Activated CD4-positive, alpha-beta memory T cell treated with anti-CD3 and anti-CD28 coated beads for 36 hours (primary cell): ENCODE measurements at regions of chr1 and their contacts with region 1.

Region 1: GRCh38 chr1:96966536-96967138 is 245.1 kb downstream of the PTBP2 start:
- DNase-seq: peak; percentile 79
- H3K4me3 Mint-ChIP-seq: no peak overlapping the region
- H3K27ac Mint-ChIP-seq: no peak overlapping the region
- H3K4me1 Mint-ChIP-seq: no peaks in the 10 kb centered on the region
- H3K27me3 Mint-ChIP-seq: peaks cover 19% of the 10 kb centered on the region

Region 2: GRCh38 chr1:97524211-97524610 is 557.6 kb after region 1 on chr1:
- CTCF ChIA-PET with region 1: no interaction called
- POLR2A ChIA-PET with region 1: no interaction called
- intact Hi-C with region 1: loop called (anchors 10 kb)
- DNase-seq: no peak
- H3K4me3 Mint-ChIP-seq: no peak overlapping the region
- H3K27ac Mint-ChIP-seq: no peak overlapping the region
- H3K4me1 Mint-ChIP-seq: no peaks in the 10 kb centered on the region
- H3K27me3 Mint-ChIP-seq: no peaks in the 10 kb centered on the region

Region 3: DNA sequence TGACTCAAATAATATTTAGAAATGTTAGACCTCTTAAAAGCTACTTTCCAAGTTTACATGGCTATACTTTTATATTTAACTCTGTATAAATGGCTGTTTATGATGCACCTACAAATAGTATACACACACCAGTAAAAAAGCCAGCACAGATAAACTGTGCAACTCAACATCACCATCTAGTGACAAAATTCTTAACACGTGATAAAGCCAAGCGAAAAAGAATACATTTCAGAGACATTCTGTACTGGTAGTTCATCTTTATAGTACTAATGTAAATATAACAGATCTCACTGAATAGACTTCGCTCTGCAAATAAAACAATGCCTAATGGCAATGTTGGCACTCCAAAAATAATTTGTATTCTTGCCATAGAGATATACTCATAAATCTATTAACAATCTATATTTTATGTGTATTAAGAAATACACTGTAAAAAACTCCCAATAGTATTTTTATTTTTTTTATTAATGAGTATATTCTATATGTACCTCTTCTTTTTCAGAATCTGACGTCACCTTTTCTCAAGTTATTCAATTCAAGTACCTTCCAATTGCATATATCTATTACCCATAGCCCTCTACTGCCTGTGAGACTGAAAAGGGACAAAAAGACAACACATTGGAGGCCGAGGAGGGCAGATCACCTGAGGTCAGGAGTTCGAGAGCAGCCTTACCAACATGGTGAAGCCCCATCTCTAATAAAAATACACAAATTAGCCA is 854.0 kb after region 1 on chr1:
- CTCF ChIA-PET with region 1: interaction called, 4 read pairs
- POLR2A ChIA-PET with region 1: no interaction called
- intact Hi-C with region 1: loop called (anchors 2 kb)
- DNase-seq: no peak
- H3K4me3 Mint-ChIP-seq: no peak overlapping the region
- H3K27ac Mint-ChIP-seq: no peak overlapping the region
- H3K4me1 Mint-ChIP-seq: no peaks in the 10 kb centered on the region
- H3K27me3 Mint-ChIP-seq: no peaks in the 10 kb centered on the region

Region 4: DNA sequence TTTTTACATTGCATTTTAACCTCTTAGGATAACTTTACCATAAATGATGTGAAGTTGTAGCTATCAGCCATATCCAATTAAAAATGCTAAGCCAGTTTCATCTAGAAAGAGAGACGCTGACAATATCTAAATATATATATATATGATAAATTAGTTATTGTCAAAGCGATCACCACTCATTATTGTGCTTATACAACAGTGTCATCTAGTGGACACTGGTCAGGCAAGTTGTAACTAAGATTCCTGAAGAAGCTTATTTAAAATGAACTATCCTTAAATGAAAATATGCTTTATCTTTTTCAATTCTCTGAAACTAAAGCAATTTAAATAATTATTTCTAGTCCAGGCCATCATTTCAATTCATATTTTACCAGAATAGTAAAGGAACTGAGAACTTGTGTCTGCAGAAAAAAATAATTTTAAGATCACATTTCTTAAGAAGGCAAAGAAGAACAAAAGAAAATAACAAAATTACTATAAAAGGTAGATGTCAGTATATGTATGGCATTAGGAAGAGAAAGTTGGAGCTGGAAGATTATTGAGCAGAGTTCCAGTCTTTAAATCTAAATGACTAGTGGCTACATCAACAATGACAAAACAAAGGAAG is 1501.6 kb after region 1 on chr1:
- CTCF ChIA-PET with region 1: no interaction called
- POLR2A ChIA-PET with region 1: no interaction called
- intact Hi-C with region 1: loop called (anchors 5 kb)
- DNase-seq: no peak
- H3K4me3 Mint-ChIP-seq: no peak overlapping the region
- H3K27ac Mint-ChIP-seq: no peak overlapping the region
- H3K4me1 Mint-ChIP-seq: no peaks in the 10 kb centered on the region
- H3K27me3 Mint-ChIP-seq: no peaks in the 10 kb centered on the region